Cardiac septum (tissue), 1 donor: ENCODE measurements at regions of chr2 and their contacts with region 1.

Region 1: GRCh38 chr2:152189622-152190495 is 14.3 kb upstream of the STAM2 start:
- DNase-seq: no peak

Region 2: GRCh38 chr2:152166633-152167032 is 23.2 kb before region 1 on chr2:
- intact Hi-C with region 1: no loop called
- DNase-seq: no peak

Region 3: DNA sequence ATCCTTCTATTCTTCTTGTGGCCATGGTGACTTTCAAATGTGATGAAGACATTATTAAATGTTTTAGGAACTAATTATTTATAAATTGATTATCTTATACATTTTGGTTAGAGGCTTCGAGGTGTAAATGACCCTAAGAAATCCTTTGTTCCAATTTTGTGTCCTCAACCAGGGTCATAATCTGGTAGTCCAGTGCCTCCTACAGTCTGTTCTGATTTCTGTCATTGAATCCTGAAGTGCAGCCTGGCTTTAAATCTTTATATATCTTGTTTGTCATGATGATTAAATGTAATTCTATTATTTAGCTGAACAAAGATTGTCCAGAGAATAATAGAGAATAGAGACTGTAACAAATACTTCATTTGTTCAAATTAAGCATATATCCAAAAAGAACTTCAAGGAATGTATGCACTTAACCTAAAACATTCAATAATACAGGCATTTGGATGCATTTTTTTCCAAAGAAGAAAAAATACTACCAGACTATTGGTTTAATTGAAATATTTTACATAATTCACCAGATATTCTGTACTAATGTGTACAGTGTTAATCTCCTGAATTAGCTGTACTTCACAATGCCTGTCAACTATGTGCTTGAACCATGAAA is 437.6 kb after region 1 on chr2:
- intact Hi-C with region 1: loop called (anchors 2 kb)
- DNase-seq: no peak

Region 4: DNA sequence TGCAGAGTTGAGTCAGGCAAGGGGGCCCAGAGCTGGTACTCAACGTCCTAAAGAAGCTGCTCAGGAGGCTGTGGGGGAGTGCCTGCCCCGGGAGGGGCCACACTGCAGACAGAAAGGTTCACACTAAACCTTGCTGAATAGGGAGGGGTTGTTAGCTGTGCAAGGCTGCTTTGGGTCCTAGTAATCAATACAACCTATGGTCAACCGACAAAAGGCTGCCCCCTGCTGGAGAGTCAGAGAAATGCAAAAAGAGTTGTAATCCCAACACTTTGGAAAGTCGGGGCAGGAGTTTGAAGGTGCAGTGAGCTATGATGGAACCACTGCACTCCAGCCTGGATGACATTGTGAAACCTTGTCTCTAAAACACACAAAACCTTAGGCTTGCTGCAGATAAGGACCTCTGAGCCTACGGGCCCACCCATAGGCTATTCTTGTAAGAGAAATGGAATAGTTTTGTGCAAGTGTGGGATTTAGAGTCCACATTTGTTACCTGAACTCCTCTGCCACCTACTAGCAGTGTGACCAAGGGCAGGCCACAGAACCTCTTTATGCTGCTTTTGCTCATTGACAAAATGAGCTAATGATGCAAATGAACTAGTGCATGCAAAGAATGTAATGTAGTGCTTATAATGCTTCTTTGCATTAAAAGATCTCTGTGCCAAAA is 445.9 kb after region 1 on chr2:
- intact Hi-C with region 1: loop called (anchors 2 kb)
- DNase-seq: peak; percentile 82